ENCODE measurements at regions of chr14 and their contacts with region 1.

Region 1: GRCh38 chr14:35826218-35826951 is at the start of gene BRMS1L:
- DNase-seq: peak; percentile 98
- ATAC-seq: peak; percentile 98 to 99 (median 98)
- H3K4me3 ChIP-seq: peak within 1 kb of the TSS; percentile 42 to 99 (median 82)
- H3K27ac ChIP-seq: peak within 1 kb of the TSS; percentile 91 to 99 (median 98)
- H3K4me1 ChIP-seq: peaks cover 0 to 16% (median 9%) of the 10 kb centered on the region in 9 donors
- H3K27me3 ChIP-seq: no peaks in the 10 kb centered on the region
- CTCF ChIP-seq: peak in 7 of 9 donors; percentile 9 to 47 (median 24)
- total RNA-seq, gene BRMS1L: 10.9 to 14.0 (median 12.0) TPM

Region 2: DNA sequence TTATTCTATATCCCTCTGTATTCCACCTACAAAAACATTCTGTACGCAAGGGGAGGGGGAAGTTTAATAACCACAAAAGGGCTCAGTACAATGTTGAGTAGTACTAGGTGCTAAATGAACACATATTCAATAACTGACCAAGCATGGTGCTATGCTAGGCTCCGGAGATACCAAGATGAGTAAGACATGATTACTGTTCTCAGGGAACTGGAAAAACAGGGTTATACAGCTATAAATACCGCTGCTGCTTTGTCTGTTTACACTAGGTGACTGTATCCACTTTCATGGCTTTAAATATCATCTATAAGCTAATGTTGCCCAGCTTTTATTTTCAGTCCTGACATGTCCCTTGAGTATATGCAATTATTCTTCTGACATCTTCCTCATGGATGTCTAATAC is 156.6 kb before region 1 on chr14:
- intact Hi-C with region 1: no loop called
- DNase-seq: no peak
- ATAC-seq: peak in 3 of 8 donors; percentile 19 to 57 (median 21)
- H3K4me3 ChIP-seq: no peak overlapping the region
- H3K27ac ChIP-seq: no peak overlapping the region
- H3K4me1 ChIP-seq: no peaks in the 10 kb centered on the region
- H3K27me3 ChIP-seq: no peaks in the 10 kb centered on the region
- CTCF ChIP-seq: no peak

Region 3: GRCh38 chr14:35808076-35808652 is 18.2 kb before region 1 on chr14:
- intact Hi-C with region 1: loop called in 2 of 10 experiments (anchors 1 to 2 kb)
- DNase-seq: no peak
- ATAC-seq: peak in 3 of 8 donors; percentile 15 to 29 (median 29)
- H3K4me3 ChIP-seq: peak overlapping the region; percentile 60 to 92 (median 78)
- H3K27ac ChIP-seq: peak overlapping the region; percentile 79 to 95 (median 92)
- H3K4me1 ChIP-seq: peaks cover 0 to 34% (median 26%) of the 10 kb centered on the region in 9 donors
- H3K27me3 ChIP-seq: no peaks in the 10 kb centered on the region
- CTCF ChIP-seq: no peak

Region 4: GRCh38 chr14:36465178-36465577 is 638.8 kb after region 1 on chr14:
- intact Hi-C with region 1: no loop called
- DNase-seq: no peak
- ATAC-seq: no peak
- H3K4me3 ChIP-seq: no peak overlapping the region
- H3K27ac ChIP-seq: no peak overlapping the region
- H3K4me1 ChIP-seq: no peaks in the 10 kb centered on the region
- H3K27me3 ChIP-seq: peaks cover 0 to 15% (median 4%) of the 10 kb centered on the region in 7 donors
- CTCF ChIP-seq: no peak

Measured in heart right ventricle (tissue), 16 donors.